Naive thymus-derived CD8-positive, alpha-beta T cell (primary cell): ENCODE measurements at regions of chr1 and their contacts with region 1.

Region 1: DNA sequence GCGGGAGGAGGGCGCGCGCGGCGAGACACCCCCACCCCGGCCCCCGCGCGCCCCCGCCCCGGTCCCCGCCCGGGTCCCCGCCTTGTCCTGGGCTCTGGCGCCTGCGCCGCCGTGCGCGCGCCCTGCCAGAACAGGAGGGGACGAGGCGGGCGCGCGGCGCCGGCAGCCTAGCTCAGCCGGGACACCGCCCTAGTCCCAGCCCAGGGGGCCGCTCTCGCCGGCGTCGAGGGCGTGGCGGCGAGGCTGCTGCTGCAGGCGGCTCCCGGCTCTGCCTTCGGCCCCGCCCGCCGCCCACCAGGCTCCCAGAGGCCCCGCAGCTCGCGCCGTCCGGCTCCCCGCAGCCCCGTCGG is at the start of gene RCAN3:
- DNase-seq: peak; percentile 79 to 95 (median 92)
- ATAC-seq: peak; percentile 61 to 63
- H3K4me3 Mint-ChIP-seq: peak within 1 kb of the TSS; percentile 80 to 99 (median 98)
- H3K27ac Mint-ChIP-seq: peak within 1 kb of the TSS; percentile 96 to 100 (median 98)
- H3K4me1 Mint-ChIP-seq: peaks cover 38 to 66% (median 62%) of the 10 kb centered on the region in 4 donors
- H3K27me3 Mint-ChIP-seq: peaks cover 0 to 4% (median 0%) of the 10 kb centered on the region in 5 donors
- polyA plus RNA-seq, gene RCAN3: 103 to 152 (median 150) TPM

Region 2: DNA sequence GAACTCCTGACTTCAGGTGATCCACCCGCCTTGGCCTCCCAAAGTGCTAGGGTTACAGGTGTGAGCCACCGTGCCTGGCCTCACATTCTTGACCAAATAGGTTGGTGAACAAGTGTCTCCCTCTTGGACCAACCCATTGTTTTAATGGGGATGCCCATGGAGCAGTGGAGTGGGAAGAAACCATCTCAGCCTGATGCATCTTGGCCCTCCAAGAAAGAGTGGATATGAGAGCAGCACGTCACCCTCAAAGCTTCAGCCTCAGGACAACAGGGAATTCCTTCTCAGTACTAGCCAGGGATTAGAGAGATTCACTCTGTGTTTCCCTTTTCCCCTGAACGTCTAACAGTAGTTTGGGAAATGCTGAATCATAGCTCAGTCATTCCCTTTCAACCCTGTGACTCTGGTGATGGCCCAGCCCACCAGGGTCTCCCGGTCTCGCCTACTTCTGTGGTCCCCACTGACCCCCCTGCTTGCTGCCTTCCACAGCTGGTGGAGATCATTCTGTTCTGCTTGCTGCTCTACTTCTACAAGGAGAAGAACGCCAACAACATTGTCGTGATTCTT is 49.7 kb before region 1 on chr1:
- POLR2A ChIA-PET with region 1: interaction called, 15 read pairs
- DNase-seq: no peak
- ATAC-seq: no peak
- H3K4me3 Mint-ChIP-seq: no peak overlapping the region
- H3K27ac Mint-ChIP-seq: peak overlapping the region in 4 of 10 donors; percentile 43 to 90 (median 74)
- H3K4me1 Mint-ChIP-seq: peaks cover 0 to 7% (median 5%) of the 10 kb centered on the region in 4 donors
- H3K27me3 Mint-ChIP-seq: no peaks in the 10 kb centered on the region

Region 3: DNA sequence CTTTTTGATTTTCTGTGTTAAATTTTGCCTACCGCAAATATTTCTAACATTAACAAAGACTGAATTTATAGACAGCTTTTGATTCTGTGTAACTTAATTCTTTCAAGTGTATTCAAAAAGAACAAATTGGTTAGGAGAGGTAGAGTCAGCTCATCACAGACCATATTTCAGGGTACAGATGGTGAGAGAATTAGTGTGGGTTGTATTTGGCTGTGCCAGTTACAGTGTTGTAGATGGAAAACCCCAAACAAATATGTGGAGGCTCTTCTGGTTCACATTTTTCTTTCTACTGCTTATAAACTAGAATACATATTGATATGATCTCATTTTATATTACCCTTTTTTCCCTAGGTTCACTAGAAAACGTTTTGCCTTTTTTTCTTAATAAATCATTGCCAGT is 11.0 kb after region 1 on chr1:
- POLR2A ChIA-PET with region 1: interaction called, 32 read pairs
- DNase-seq: no peak
- ATAC-seq: peak in 1 of 2 donors; percentile 45
- H3K4me3 Mint-ChIP-seq: peak overlapping the region; percentile 38 to 86 (median 57)
- H3K27ac Mint-ChIP-seq: peak overlapping the region; percentile 23 to 98 (median 81)
- H3K4me1 Mint-ChIP-seq: peaks cover 38 to 92% (median 78%) of the 10 kb centered on the region in 4 donors
- H3K27me3 Mint-ChIP-seq: no peaks in the 10 kb centered on the region

Region 4: GRCh38 chr1:24536391-24536840 is 33.7 kb after region 1 on chr1:
- POLR2A ChIA-PET with region 1: interaction called, 47 read pairs
- DNase-seq: peak; percentile 50 to 91 (median 84)
- ATAC-seq: peak; percentile 59 to 86
- H3K4me3 Mint-ChIP-seq: peak overlapping the region; percentile 72 to 90 (median 84)
- H3K27ac Mint-ChIP-seq: peak overlapping the region; percentile 98 to 100 (median 99)
- H3K4me1 Mint-ChIP-seq: peaks cover 27 to 82% (median 64%) of the 10 kb centered on the region in 4 donors
- H3K27me3 Mint-ChIP-seq: no peaks in the 10 kb centered on the region